ENCODE measurements at regions of chr7 and their contacts with region 1.

Region 1: DNA sequence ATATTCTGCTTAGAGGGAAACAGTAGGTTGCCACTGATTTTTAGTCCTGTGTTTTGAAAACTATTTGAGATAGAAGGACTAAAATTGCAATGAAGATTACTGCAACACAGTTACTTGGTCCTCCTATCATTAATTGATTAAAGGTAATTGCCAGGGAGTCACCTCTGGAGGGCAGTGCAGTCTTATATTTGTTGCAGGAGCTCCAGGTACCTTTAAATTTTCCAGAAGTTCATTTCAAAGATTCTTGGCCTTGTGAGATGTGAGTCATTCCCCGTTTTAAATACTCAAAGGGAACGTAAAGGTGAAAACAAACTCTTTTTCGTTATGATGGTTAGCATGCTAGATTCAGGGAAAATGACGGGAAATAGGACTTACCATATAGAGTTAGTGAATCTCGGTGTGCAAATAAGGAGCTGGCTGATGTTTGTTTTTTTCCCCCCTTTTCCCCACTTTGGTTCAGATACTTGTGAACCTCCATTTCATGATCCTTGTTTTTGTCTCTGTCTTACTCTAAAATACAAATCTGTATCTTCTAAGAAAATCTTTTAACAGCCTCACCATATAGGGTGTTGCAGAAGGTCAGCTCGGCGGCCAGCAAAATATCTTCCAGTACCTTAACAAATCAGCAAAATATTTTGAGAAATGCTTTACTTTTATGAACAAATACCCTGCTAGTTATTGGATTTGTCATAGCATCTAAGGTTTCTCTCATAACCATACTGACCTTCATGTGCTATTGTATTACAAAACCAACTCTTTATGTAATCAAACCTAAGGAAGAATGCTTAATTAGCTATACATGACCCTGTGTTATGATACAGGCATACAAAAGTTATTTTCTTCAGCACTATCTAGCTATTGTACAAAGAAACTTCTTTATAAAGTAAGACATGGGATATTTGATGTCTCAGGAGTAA is 143.0 kb upstream of the HDAC9 start:
- DNase-seq: peak; percentile 10 to 37 (median 22)
- ATAC-seq: peak; percentile 77
- H3K4me3 ChIP-seq: no peak overlapping the region
- H3K27ac ChIP-seq: no peak overlapping the region
- H3K4me1 ChIP-seq: no peaks in the 10 kb centered on the region
- H3K27me3 ChIP-seq: no peaks in the 10 kb centered on the region
- CTCF ChIP-seq: peak; percentile 36 to 58 (median 51); a peak in 5 of 6 replicates
- EP300 ChIP-seq: no peak
- POLR2A ChIP-seq: no peak
- RAD21 ChIP-seq: peak; percentile 52 to 66

Region 2: DNA sequence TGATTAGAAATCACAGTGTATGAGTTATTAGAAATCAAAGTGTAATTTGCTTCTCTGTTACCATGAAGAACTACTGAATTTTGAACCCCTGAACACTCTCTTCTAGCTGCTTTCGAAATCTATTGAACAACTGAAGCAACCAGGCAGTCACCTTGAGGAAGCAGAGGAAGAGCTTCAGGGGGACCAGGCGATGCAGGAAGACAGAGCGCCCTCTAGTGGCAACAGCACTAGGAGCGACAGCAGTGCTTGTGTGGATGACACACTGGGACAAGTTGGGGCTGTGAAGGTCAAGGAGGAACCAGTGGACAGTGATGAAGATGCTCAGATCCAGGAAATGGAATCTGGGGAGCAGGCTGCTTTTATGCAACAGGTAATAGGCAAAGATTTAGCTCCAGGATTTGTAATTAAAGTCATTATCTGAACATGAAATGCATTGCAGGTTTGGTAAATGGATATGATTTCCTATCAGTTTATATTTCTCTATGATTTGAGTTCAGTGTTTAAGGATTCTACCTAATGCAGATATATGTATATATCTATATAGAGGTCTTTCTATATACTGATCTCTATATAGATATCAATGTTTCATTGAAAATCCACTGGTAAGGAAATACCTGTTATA is 313.6 kb after region 1 on chr7:
- CTCF ChIA-PET with region 1: no interaction called
- POLR2A ChIA-PET with region 1: no interaction called
- in situ Hi-C with region 1: no loop called
- intact Hi-C with region 1: loop called (anchors 5 kb)
- DNase-seq: peak; percentile 37 to 59 (median 47)
- ATAC-seq: peak; percentile 72; the same call in 2 of the 3 replicates
- H3K4me3 ChIP-seq: no peak overlapping the region
- H3K27ac ChIP-seq: no peak overlapping the region
- H3K4me1 ChIP-seq: no peaks in the 10 kb centered on the region
- H3K27me3 ChIP-seq: no peaks in the 10 kb centered on the region
- CTCF ChIP-seq: peak; percentile 54 to 78 (median 54)
- EP300 ChIP-seq: no peak
- POLR2A ChIP-seq: no peak
- RAD21 ChIP-seq: peak; percentile 45 to 68

Region 3: GRCh38 chr7:18740579-18740988 is 388.0 kb after region 1 on chr7:
- CTCF ChIA-PET with region 1: no interaction called
- POLR2A ChIA-PET with region 1: no interaction called
- in situ Hi-C with region 1: no loop called
- intact Hi-C with region 1: no loop called
- DNase-seq: no peak
- ATAC-seq: no peak
- H3K4me3 ChIP-seq: no peak overlapping the region
- H3K27ac ChIP-seq: no peak overlapping the region
- H3K4me1 ChIP-seq: no peaks in the 10 kb centered on the region
- H3K27me3 ChIP-seq: no peaks in the 10 kb centered on the region
- CTCF ChIP-seq: no peak
- EP300 ChIP-seq: no peak
- POLR2A ChIP-seq: no peak
- RAD21 ChIP-seq: no peak

Region 4: DNA sequence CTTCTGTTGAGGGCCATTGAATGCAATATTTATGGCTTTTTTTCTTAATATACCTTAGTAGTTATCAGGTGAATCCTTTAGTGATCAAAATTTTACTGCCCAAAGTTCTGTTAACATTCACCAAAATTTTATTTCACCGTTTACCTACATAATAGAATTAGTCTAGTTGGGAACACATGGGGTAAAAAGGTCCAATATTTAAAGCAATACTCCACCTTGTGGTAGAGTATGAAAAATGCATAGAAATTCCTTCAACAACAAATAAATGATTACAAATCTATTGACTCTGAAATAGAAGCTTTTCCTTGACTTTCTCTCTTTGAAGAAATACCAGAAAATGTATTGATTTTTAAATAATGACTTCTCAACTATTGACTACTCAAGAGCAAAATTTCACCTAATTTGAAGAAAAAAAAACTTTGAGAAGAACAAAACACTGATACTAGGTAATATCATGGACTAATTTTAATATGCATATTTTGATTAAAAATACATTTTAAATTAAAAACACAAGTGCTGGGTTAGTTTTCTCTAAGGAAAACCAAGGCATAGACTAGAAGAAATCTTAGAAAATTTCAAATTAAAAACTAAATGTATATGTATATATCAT is 1312.9 kb after region 1 on chr7:
- CTCF ChIA-PET with region 1: no interaction called
- POLR2A ChIA-PET with region 1: interaction called, 3 read pairs
- in situ Hi-C with region 1: loop called (anchors 25 kb)
- intact Hi-C with region 1: loop called (anchors 5 kb)
- DNase-seq: peak; percentile 15 to 35 (median 28)
- ATAC-seq: peak; percentile 63; the same call in 1 of the 3 replicates
- H3K4me3 ChIP-seq: no peak overlapping the region
- H3K27ac ChIP-seq: no peak overlapping the region
- H3K4me1 ChIP-seq: no peaks in the 10 kb centered on the region; a peak in 1 of 5 replicates
- H3K27me3 ChIP-seq: no peaks in the 10 kb centered on the region
- CTCF ChIP-seq: peak; percentile 21 to 67 (median 32); a peak in 4 of 6 replicates
- EP300 ChIP-seq: no peak
- POLR2A ChIP-seq: no peak
- RAD21 ChIP-seq: peak; percentile 63 to 68